K562 (cell line): ENCODE measurements at regions of chr3 and their contacts with region 1.

Region 1: GRCh38 chr3:41649133-41649739 is 312.7 kb downstream of the ULK4 start:
- DNase-seq: no peak
- ATAC-seq: no peak
- H3K4me3 ChIP-seq: no peak overlapping the region
- H3K27ac ChIP-seq: no peak overlapping the region
- H3K4me1 ChIP-seq: peaks cover 0 to 5% of the 10 kb centered on the region in 2 experiments; a peak in 2 of 5 replicates
- H3K27me3 ChIP-seq: peaks cover 0 to 15% of the 10 kb centered on the region in 2 experiments; a peak in 2 of 5 replicates
- CTCF ChIP-seq: no peak
- EP300 ChIP-seq: no peak
- POLR2A ChIP-seq: no peak
- RAD21 ChIP-seq: no peak

Region 2: GRCh38 chr3:41041462-41041861 is 607.8 kb before region 1 on chr3:
- CTCF ChIA-PET with region 1: no interaction called
- POLR2A ChIA-PET with region 1: no interaction called
- in situ Hi-C with region 1: no loop called
- intact Hi-C with region 1: no loop called
- DNase-seq: no peak
- ATAC-seq: no peak
- H3K4me3 ChIP-seq: no peak overlapping the region
- H3K27ac ChIP-seq: no peak overlapping the region
- H3K4me1 ChIP-seq: peaks cover 0 to 5% of the 10 kb centered on the region in 2 experiments; a peak in 2 of 5 replicates
- H3K27me3 ChIP-seq: peaks cover 4 to 16% of the 10 kb centered on the region in 2 experiments; a peak in 4 of 5 replicates
- CTCF ChIP-seq: no peak
- EP300 ChIP-seq: no peak
- POLR2A ChIP-seq: no peak
- RAD21 ChIP-seq: no peak

Region 3: DNA sequence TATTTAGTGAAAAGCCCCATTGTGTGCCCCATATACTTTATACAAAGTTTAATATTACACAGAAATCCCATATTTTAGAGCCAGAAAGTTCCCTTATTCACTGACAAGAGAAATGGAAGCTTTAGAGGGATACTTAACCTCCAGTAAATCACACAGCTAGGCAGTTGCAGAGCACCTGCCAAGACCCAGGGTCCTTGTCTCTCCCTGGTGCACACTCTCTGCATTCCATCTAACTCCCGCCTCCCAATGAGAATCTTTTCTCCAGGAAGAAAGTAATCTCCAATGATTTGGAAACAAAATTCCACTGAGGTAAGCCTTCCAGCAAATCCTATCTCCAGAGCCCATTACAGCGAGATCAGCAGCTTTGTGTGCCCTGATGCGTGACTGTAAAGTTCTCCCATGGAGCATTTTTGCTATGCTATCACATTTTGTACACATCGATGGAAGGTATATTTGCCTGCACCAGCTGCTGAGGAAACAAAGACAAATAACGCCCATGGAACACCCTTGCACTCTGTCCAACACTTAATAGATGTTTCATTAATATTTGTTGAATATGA is 271.2 kb after region 1 on chr3:
- CTCF ChIA-PET with region 1: no interaction called
- POLR2A ChIA-PET with region 1: no interaction called
- in situ Hi-C with region 1: no loop called
- intact Hi-C with region 1: no loop called
- DNase-seq: no peak
- ATAC-seq: no peak
- H3K4me3 ChIP-seq: no peak overlapping the region
- H3K27ac ChIP-seq: no peak overlapping the region
- H3K4me1 ChIP-seq: no peaks in the 10 kb centered on the region
- H3K27me3 ChIP-seq: peaks cover 2 to 6% of the 10 kb centered on the region in 2 experiments; a peak in 3 of 5 replicates
- CTCF ChIP-seq: no peak
- EP300 ChIP-seq: no peak
- POLR2A ChIP-seq: no peak
- RAD21 ChIP-seq: no peak

Region 4: DNA sequence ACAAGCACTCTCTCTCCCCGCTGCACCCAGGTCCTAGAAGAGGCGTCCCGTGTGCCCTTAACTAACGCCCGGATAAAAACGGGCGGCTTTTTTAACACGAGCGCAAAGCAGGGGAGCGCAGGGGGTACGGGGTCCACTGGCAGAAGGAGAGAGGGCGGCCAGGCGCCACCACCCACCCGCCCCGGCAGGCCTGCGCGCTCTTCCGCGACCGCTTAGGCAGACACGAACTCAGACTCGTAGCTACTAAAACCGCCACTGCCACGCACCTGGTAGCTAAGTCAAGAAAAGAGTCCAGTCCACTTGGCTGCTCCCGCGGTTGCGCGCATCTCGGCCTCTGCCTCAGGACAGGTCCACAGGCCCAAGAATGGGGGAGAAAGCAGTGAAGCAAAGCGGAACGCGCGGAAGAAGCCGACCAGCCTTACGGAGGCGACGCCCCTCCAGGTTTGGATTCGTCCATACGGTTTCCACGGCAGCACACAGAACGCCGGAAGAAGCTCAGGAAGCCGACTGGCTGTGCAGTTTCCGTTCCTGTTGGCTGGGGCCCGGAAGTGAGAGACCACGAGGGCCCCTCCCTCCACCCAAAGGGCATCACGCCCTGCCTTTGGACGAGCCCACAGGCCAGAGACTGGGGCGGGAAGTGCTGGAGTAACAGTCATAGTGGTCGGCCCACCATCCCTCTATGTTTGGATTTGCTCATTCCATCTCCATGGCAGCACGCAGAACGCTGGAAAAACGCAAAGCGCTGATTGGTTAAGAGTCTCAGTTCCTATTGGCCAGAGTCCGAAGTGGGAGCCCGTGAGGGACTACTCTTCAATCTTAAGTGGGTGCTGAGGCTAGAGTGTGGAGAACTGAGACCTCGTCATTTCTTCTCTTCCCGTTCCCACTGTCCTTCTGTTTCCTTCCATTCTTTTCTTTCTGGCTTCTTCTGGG is 312.8 kb after region 1 on chr3 and contains the start of gene ULK4:
- CTCF ChIA-PET with region 1: no interaction called
- POLR2A ChIA-PET with region 1: no interaction called
- in situ Hi-C with region 1: no loop called
- intact Hi-C with region 1: no loop called
- DNase-seq: peak; percentile 91 to 99 (median 92)
- ATAC-seq: peak; percentile 99
- H3K4me3 ChIP-seq: peak within 1 kb of the TSS; percentile 62
- H3K27ac ChIP-seq: peak within 1 kb of the TSS; percentile 24; the same call in 2 of the 3 replicates
- H3K4me1 ChIP-seq: peaks cover 10% of the 10 kb centered on the region in 2 experiments; a peak in 4 of 5 replicates
- H3K27me3 ChIP-seq: peaks cover 0 to 6% of the 10 kb centered on the region in 2 experiments; a peak in 3 of 5 replicates
- CTCF ChIP-seq: no peak
- EP300 ChIP-seq: peak; percentile 43
- POLR2A ChIP-seq: peak; percentile 56
- RAD21 ChIP-seq: no peak
- polyA plus RNA-seq, gene ULK4: 3.4 to 5.4 TPM

Region 5: GRCh38 chr3:43559963-43560362 is 1910.7 kb after region 1 on chr3:
- CTCF ChIA-PET with region 1: no interaction called
- POLR2A ChIA-PET with region 1: no interaction called
- in situ Hi-C with region 1: loop called (anchors 5 kb)
- intact Hi-C with region 1: no loop called
- DNase-seq: no peak
- ATAC-seq: no peak; the same call in 2 of the 3 replicates
- H3K4me3 ChIP-seq: no peak overlapping the region
- H3K27ac ChIP-seq: no peak overlapping the region
- H3K4me1 ChIP-seq: no peaks in the 10 kb centered on the region
- H3K27me3 ChIP-seq: no peaks in the 10 kb centered on the region
- CTCF ChIP-seq: peak in 2 of 3 experiments; percentile 47 to 50; a peak in 3 of 6 replicates
- EP300 ChIP-seq: no peak
- POLR2A ChIP-seq: no peak
- RAD21 ChIP-seq: 0 out of 4 replicates have a peak, but pooled peaks of 1 of the 2 experiments have one; percentile 20